ENCODE measurements at regions of chr11 and their contacts with region 1.

Region 1: GRCh38 chr11:102390667-102391465 is 43.9 kb downstream of the BIRC2 start:
- DNase-seq: no peak
- ATAC-seq: peak; percentile 93
- H3K4me3 ChIP-seq: no peak overlapping the region
- H3K27ac ChIP-seq: no peak overlapping the region
- H3K4me1 ChIP-seq: no peaks in the 10 kb centered on the region; the same call in 1 of the 2 replicates
- H3K27me3 ChIP-seq: no peaks in the 10 kb centered on the region
- CTCF ChIP-seq: peak; percentile 82 to 91 (median 89)
- EP300 ChIP-seq: no peak
- POLR2A ChIP-seq: no peak
- RAD21 ChIP-seq: peak; percentile 76

Region 2: DNA sequence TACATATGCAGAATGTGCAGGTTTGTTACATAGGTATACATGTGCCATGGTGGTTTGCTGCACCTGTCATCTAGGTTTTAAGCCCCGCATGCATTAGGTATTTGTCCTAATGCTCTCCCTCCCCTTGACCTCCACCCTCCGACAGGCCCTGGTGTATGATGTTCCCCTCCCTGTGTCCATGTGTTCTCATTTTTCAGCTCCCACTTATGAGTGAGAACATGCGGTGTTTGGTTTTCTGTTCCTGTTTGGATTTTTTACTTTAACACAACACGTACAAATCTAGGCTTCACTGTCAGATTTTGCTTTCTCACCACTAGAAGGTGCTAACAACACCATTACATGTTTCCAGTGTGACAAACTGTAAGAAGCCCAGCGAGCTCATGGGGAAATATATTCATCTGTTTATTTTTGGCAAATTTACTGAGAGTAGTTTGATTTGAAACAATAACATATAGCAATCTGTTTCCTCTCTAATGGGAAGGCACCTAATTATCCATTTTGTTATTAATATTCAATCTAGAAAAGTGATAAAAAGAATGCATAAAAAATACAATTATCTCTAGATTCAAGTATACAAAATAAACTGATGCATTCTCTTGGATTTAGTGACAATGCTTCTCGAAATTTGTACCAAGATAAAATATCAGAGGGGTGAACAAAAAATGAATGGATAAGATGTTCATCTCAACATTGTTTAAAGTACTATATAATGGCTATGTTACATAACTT is 96.8 kb before region 1 on chr11:
- CTCF ChIA-PET with region 1: interaction called, 21 read pairs
- POLR2A ChIA-PET with region 1: interaction called, 4 read pairs
- RAD21 ChIA-PET with region 1: interaction called, 5 read pairs
- SMC1A ChIA-PET with region 1: interaction called, 15 read pairs
- in situ Hi-C with region 1: no loop called
- intact Hi-C with region 1: no loop called
- DNase-seq: no peak
- ATAC-seq: peak; percentile 96
- H3K4me3 ChIP-seq: no peak overlapping the region
- H3K27ac ChIP-seq: 0 out of 2 replicates have a peak overlapping the region, but pooled peaks have one; percentile 8
- H3K4me1 ChIP-seq: peaks cover 12% of the 10 kb centered on the region
- H3K27me3 ChIP-seq: no peaks in the 10 kb centered on the region
- CTCF ChIP-seq: peak; percentile 77 to 81 (median 79)
- EP300 ChIP-seq: no peak
- POLR2A ChIP-seq: no peak
- RAD21 ChIP-seq: peak; percentile 84

Region 3: DNA sequence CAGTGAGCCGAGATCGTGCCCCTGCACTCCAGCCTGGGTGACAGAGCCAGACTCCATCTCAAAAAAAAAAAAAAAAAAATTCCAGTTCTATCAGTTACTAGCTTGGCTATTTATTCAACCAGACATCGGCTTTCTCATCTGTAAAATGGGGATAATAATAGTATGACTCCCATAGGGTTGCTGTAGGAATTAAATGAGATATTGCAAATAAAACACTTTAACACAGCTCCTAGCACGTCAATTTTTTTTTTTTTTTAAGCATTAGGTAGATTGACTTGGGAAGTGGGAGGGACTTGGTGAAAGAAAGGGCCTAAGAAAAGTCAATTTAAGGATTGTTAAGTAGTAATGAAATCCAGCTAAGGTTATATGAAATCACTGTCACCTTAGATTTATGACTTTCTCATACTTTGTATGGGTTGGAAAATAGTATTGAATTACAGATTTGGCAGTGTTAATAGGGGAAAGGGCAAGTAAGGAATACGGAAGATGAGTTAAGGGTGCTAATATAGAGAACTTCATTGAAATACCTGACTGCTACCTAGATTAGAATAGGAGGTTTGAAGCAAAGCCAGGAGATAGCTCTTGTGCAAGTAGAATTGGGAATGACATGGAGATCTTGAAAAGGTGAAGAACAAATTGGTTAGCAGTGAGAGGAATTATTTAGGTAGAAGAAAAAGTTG is 15.0 kb before region 1 on chr11:
- CTCF ChIA-PET with region 1: interaction called, 22 read pairs
- POLR2A ChIA-PET with region 1: interaction called, 8 read pairs
- RAD21 ChIA-PET with region 1: interaction called, 4 read pairs
- SMC1A ChIA-PET with region 1: interaction called, 5 read pairs
- in situ Hi-C with region 1: no loop called
- intact Hi-C with region 1: no loop called
- DNase-seq: no peak
- ATAC-seq: no peak
- H3K4me3 ChIP-seq: no peak overlapping the region
- H3K27ac ChIP-seq: no peak overlapping the region
- H3K4me1 ChIP-seq: no peaks in the 10 kb centered on the region
- H3K27me3 ChIP-seq: no peaks in the 10 kb centered on the region
- CTCF ChIP-seq: no peak
- EP300 ChIP-seq: no peak
- POLR2A ChIP-seq: no peak
- RAD21 ChIP-seq: no peak

Region 4: DNA sequence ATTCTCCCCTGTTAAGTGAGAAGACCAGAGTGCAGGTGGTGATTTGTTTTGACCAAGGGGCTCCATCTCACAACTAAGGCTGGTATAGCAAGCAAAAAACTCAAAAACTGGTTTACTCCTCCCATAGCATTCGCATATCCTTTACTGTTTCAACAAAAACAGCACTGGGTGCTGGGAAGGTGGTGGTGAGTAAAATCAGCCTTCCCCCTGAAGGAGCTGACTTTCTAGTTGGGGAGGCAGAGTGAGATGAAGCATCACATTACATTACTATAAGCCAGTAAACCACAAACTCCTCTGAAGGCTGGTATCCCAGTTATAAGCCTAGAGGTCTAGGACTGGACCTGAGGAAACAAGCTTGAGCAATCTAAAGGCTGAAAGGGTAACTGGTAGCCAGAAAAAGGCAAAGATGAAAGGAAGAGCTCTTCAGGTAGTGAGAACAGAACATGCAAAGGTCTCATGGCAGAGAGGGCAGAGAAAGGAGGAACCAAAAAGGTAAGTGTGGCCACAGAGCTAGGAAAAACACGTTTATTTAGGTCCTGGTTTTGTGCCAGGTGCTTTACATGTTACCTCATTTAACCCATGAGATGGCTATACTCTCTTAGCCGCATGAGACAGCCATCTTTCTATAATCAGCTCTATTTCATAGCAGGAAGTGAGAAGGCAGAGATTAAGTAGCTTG is 39.4 kb after region 1 on chr11:
- CTCF ChIA-PET with region 1: interaction called, 19 read pairs
- POLR2A ChIA-PET with region 1: interaction called, 8 read pairs
- RAD21 ChIA-PET with region 1: interaction called, 11 read pairs
- SMC1A ChIA-PET with region 1: interaction called, 11 read pairs
- in situ Hi-C with region 1: no loop called
- intact Hi-C with region 1: no loop called
- DNase-seq: peak; percentile 99
- ATAC-seq: peak; percentile 90
- H3K4me3 ChIP-seq: peak overlapping the region; percentile 53
- H3K27ac ChIP-seq: peak overlapping the region; percentile 91
- H3K4me1 ChIP-seq: peaks cover 35% of the 10 kb centered on the region
- H3K27me3 ChIP-seq: no peaks in the 10 kb centered on the region
- CTCF ChIP-seq: no peak
- EP300 ChIP-seq: peak; percentile 76 to 82; a peak in 2 of 4 replicates
- POLR2A ChIP-seq: no peak
- RAD21 ChIP-seq: no peak; the same call in 1 of the 2 replicates

Region 5: DNA sequence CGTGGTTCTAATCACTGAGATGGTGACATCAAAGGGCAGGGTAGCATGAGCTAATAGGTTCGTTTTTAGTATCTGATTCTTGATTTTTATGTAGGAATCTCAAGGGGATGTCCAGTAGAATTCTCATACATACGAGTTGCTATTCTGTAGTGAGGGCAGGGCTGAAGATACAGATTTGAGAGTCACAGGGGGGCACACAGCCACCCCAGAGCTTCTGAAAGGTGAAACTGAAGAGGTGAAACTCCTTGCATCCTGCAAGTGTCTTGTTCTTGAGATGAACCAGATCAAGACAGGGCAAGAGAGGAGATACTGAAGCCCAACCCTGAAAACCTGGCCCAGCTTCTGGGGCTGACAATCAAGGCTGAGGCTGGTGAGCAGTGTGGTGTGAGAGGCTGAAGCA is 97.3 kb after region 1 on chr11:
- CTCF ChIA-PET with region 1: interaction called, 24 read pairs
- POLR2A ChIA-PET with region 1: no interaction called
- RAD21 ChIA-PET with region 1: interaction called, 11 read pairs
- SMC1A ChIA-PET with region 1: interaction called, 56 read pairs
- in situ Hi-C with region 1: loop called (anchors 25 kb)
- intact Hi-C with region 1: no loop called
- DNase-seq: no peak
- ATAC-seq: peak; percentile 86
- H3K4me3 ChIP-seq: no peak overlapping the region
- H3K27ac ChIP-seq: no peak overlapping the region
- H3K4me1 ChIP-seq: peaks cover 18% of the 10 kb centered on the region
- H3K27me3 ChIP-seq: 0 out of 4 replicates have a peak, but pooled peaks cover 0 to 3% of the 10 kb centered on the region in 2 experiments
- CTCF ChIP-seq: no peak
- EP300 ChIP-seq: no peak
- POLR2A ChIP-seq: no peak
- RAD21 ChIP-seq: no peak

Region 6: GRCh38 chr11:102760355-102761035 is 369.6 kb after region 1 on chr11:
- CTCF ChIA-PET with region 1: no interaction called
- POLR2A ChIA-PET with region 1: no interaction called
- RAD21 ChIA-PET with region 1: no interaction called
- SMC1A ChIA-PET with region 1: no interaction called
- in situ Hi-C with region 1: no loop called
- intact Hi-C with region 1: no loop called
- DNase-seq: no peak
- ATAC-seq: no peak
- H3K4me3 ChIP-seq: no peak overlapping the region
- H3K27ac ChIP-seq: no peak overlapping the region
- H3K4me1 ChIP-seq: no peaks in the 10 kb centered on the region
- H3K27me3 ChIP-seq: no peaks in the 10 kb centered on the region; a peak in 2 of 4 replicates
- CTCF ChIP-seq: no peak
- EP300 ChIP-seq: no peak
- POLR2A ChIP-seq: no peak
- RAD21 ChIP-seq: no peak

Measured in GM12878 (cell line).